ENCODE measurements at regions of chrX and their contacts with region 1.

Region 1: DNA sequence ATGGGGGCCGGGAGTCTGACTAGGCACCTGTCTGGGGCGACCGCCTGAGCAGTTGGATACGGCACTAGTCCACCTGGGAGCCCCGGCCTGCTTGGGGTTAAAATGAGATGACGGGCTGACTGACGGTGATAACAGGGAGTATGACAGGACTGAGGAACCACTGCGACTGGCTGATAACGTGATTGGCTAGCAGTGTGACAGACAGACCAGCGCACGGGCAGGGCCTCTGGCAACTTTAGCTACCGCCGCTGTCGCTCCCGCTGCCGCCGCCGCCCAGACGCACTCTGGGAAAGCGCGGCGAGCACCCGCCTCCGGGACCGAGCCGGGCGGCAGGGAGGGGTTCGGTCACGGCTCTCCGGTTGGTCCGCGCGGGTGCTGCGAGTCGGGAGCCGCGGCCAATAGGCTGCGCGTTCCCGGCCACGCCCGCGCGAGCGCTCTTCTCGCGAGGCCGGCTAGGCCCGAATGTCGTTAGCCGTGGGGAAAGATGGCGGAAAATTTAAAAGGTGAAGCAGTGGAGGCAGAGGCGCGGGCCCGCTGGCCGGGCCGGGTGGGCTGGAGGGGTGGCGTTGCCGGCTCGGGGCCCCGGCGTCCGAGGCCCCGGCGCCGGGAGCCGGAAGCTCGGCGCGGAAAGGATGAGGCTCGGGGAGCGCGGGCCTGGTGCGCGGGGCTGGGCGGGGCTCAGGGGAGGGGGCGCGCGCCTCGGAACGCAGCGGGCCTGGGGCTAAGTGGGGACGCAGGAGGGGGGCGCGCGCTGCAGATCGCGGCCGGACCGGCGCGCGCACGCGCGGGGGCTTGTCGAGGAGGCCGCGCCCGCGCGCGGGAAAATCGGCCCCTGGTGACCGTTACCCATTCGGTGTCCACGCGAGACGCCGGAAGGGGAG is at the start of gene SUV39H1:
- DNase-seq: peak; percentile 89
- ATAC-seq: peak; percentile 95
- H3K4me3 ChIP-seq: peak within 1 kb of the TSS; percentile 13 to 63 (median 60)
- H3K4me3 Mint-ChIP-seq: peak within 1 kb of the TSS; percentile 92
- H3K27ac ChIP-seq: peak within 1 kb of the TSS; percentile 63 to 85
- H3K27ac Mint-ChIP-seq: peak within 1 kb of the TSS; percentile 93
- H3K4me1 ChIP-seq: peaks cover 7 to 16% of the 10 kb centered on the region in 2 donors
- H3K4me1 Mint-ChIP-seq: peaks cover 16% of the 10 kb centered on the region
- H3K27me3 ChIP-seq: no peaks in the 10 kb centered on the region
- H3K27me3 Mint-ChIP-seq: no peaks in the 10 kb centered on the region
- CTCF ChIP-seq: no peak
- total RNA-seq, gene SUV39H1: 8.9 and 9.5 TPM in 2 replicates

Region 2: DNA sequence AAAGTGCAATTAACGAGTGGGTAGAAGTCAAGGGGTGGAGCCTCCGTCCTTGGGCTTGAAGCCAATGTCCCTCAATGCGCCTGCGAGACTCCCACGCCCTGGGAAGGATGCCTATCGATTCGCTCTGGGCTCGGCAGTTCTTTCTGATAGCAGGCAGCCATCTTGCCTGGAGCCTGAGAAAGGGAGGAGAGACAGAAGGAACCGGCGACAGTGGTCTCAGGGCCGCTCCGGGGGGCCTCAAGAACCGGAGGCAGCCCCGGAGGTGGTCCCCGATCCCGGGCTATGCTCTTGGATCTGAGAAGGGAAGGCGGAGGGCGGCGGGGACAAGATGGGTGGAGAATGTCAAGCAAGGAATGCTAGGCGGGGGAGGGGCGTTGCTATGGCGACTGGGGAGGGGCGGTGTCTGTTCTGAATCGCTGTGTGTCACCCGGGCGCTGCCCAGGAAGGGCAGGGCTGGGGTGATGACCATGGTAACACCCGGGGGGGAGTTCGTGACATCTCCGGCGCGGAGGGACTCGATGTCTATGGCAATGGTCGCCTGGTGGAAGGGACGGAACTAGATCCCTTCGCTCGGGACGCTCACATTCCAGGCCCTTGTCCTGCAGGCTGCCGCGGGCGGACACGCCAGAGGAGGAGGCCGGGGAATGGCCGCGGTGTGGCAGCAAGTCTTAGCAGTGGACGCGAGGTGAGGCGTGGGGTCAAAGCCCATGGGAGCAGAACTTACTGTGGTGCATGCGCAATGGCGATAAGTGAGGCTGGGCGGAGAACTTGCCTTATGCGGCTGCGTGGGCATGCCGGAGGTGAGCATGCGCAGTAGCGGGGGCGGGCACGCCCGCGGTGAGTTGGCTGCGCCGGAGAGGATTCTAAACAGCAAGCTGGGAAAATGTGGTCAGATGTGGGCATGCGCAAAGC is 98.9 kb before region 1 on chrX and contains the start of gene WDR13:
- CTCF ChIA-PET with region 1: no interaction called
- POLR2A ChIA-PET with region 1: no interaction called
- intact Hi-C with region 1: loop called (anchors 5 kb)
- DNase-seq: peak; percentile 91
- ATAC-seq: peak; percentile 76
- H3K4me3 ChIP-seq: peak within 1 kb of the TSS; percentile 55 to 93 (median 75)
- H3K4me3 Mint-ChIP-seq: peak within 1 kb of the TSS; percentile 98
- H3K27ac ChIP-seq: peak within 1 kb of the TSS; percentile 95 to 98
- H3K27ac Mint-ChIP-seq: peak within 1 kb of the TSS; percentile 100
- H3K4me1 ChIP-seq: peaks cover 0 to 12% of the 10 kb centered on the region in 2 donors
- H3K4me1 Mint-ChIP-seq: peaks cover 8% of the 10 kb centered on the region
- H3K27me3 ChIP-seq: no peaks in the 10 kb centered on the region
- H3K27me3 Mint-ChIP-seq: no peaks in the 10 kb centered on the region
- CTCF ChIP-seq: no peak
- total RNA-seq, gene WDR13: 85.1 and 94.6 TPM in 2 replicates

Region 3: GRCh38 chrX:48676106-48676892 is 20.2 kb before region 1 on chrX:
- CTCF ChIA-PET with region 1: no interaction called
- POLR2A ChIA-PET with region 1: no interaction called
- intact Hi-C with region 1: loop called (anchors 1 kb)
- DNase-seq: peak; percentile 91
- ATAC-seq: peak; percentile 95
- H3K4me3 ChIP-seq: peak overlapping the region; percentile 47 to 75 (median 68)
- H3K4me3 Mint-ChIP-seq: peak overlapping the region; percentile 91
- H3K27ac ChIP-seq: peak overlapping the region; percentile 77 to 85
- H3K27ac Mint-ChIP-seq: peak overlapping the region; percentile 93
- H3K4me1 ChIP-seq: peaks cover 0 to 26% of the 10 kb centered on the region in 2 donors
- H3K4me1 Mint-ChIP-seq: peaks cover 18% of the 10 kb centered on the region
- H3K27me3 ChIP-seq: no peaks in the 10 kb centered on the region
- H3K27me3 Mint-ChIP-seq: no peaks in the 10 kb centered on the region
- CTCF ChIP-seq: no peak

Region 4: DNA sequence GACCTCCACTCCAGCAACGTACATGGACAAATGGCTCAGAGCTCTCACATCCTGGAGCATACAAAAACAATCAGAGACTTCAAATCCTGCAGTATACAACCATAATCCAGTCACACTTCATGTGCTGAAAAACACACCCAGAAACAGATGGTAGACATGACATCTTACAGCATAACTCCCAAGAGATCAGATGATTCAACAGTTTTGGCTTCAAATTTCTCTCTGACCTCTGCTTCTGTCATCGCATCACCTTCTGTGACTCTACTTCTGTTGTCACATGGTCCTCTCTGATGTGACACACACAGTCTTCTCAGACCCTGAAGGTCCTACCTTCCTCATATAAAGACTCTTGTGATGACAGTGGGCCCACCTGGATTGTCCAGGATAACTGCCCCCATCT is 18.5 kb after region 1 on chrX:
- CTCF ChIA-PET with region 1: no interaction called
- POLR2A ChIA-PET with region 1: no interaction called
- intact Hi-C with region 1: no loop called
- DNase-seq: no peak
- ATAC-seq: no peak
- H3K4me3 ChIP-seq: no peak overlapping the region
- H3K4me3 Mint-ChIP-seq: no peak overlapping the region
- H3K27ac ChIP-seq: no peak overlapping the region
- H3K27ac Mint-ChIP-seq: no peak overlapping the region
- H3K4me1 ChIP-seq: no peaks in the 10 kb centered on the region
- H3K4me1 Mint-ChIP-seq: peaks cover 7% of the 10 kb centered on the region
- H3K27me3 ChIP-seq: no peaks in the 10 kb centered on the region
- H3K27me3 Mint-ChIP-seq: no peaks in the 10 kb centered on the region
- CTCF ChIP-seq: no peak

Region 5: DNA sequence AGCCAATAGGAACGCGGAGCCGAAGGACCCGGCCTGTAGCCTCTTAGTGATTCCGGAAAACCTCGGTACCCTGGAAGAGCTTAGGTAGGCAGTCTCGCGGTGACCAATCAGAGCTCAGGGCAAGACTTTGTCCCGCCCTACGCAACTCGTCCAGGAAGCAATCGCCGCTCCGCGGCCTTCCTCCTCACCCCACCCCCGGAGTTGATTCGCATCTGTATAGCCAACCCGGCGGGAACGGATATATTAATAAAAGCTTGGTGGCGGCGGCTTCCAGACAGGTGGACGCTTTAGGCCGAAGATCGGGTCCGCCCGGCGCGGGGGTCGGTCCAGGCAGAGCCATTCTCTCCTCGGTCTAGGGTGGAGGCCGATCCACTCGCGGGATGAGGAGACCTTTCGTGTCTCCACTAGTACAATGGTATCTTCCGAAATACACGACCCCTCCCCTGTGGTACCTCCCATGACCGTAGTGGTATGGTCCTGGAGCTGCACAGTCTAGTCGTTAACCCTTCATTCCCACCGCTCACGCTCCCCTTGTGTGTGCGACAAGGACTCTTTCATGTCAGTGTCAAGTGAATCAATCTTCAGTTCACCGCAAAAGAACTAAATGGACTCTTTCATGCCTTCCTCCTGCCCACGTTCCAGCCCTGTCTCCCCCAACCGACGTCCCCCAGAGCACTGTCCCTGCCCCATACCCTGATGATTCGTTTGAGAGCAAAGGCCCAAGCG is 40.8 kb after region 1 on chrX:
- CTCF ChIA-PET with region 1: no interaction called
- POLR2A ChIA-PET with region 1: interaction called, 4 read pairs
- intact Hi-C with region 1: loop called (anchors 1 kb)
- DNase-seq: peak; percentile 94
- ATAC-seq: peak; percentile 98
- H3K4me3 ChIP-seq: peak overlapping the region; percentile 15 to 75 (median 67)
- H3K4me3 Mint-ChIP-seq: peak overlapping the region; percentile 98
- H3K27ac ChIP-seq: peak overlapping the region; percentile 85 to 91
- H3K27ac Mint-ChIP-seq: peak overlapping the region; percentile 96
- H3K4me1 ChIP-seq: peaks cover 0 to 15% of the 10 kb centered on the region in 2 donors
- H3K4me1 Mint-ChIP-seq: peaks cover 13% of the 10 kb centered on the region
- H3K27me3 ChIP-seq: no peaks in the 10 kb centered on the region
- H3K27me3 Mint-ChIP-seq: no peaks in the 10 kb centered on the region
- CTCF ChIP-seq: no peak

Region 6: DNA sequence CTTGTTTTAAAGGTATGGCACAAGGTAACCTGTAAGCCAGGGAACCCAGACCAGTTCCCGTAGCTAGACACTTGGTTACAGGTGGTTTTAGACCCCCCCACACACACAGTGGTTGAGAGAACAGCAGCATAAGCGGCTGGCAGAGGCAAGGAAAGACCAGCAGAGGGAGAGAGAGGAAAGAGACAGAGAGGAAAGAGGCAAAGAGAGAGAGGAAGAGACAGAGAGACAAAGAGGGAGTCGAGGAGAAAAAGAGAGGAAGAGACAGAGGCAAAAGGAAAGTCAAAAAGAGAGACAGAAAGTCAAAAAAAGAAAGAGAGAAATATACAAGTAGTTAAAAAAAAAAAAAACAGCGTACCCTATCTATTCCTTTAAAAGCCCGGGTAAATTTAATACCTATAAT is 158.4 kb after region 1 on chrX:
- CTCF ChIA-PET with region 1: no interaction called
- POLR2A ChIA-PET with region 1: no interaction called
- intact Hi-C with region 1: no loop called
- DNase-seq: no peak
- ATAC-seq: no peak
- H3K4me3 ChIP-seq: no peak overlapping the region
- H3K4me3 Mint-ChIP-seq: no peak overlapping the region
- H3K27ac ChIP-seq: no peak overlapping the region
- H3K27ac Mint-ChIP-seq: no peak overlapping the region
- H3K4me1 ChIP-seq: no peaks in the 10 kb centered on the region
- H3K4me1 Mint-ChIP-seq: no peaks in the 10 kb centered on the region
- H3K27me3 ChIP-seq: no peaks in the 10 kb centered on the region
- H3K27me3 Mint-ChIP-seq: peaks cover 10% of the 10 kb centered on the region
- CTCF ChIP-seq: no peak

Region 7: GRCh38 chrX:48891402-48892288 is 195.1 kb after region 1 on chrX:
- CTCF ChIA-PET with region 1: no interaction called
- POLR2A ChIA-PET with region 1: no interaction called
- intact Hi-C with region 1: loop called (anchors 5 kb)
- DNase-seq: peak; percentile 87
- ATAC-seq: peak; percentile 84
- H3K4me3 ChIP-seq: peak overlapping the region in 4 of 5 experiments; percentile 46 to 65 (median 60)
- H3K4me3 Mint-ChIP-seq: peak overlapping the region; percentile 84
- H3K27ac ChIP-seq: peak overlapping the region in 1 of 2 donors; percentile 48
- H3K27ac Mint-ChIP-seq: peak overlapping the region; percentile 73
- H3K4me1 ChIP-seq: peaks cover 6 to 9% of the 10 kb centered on the region in 2 donors
- H3K4me1 Mint-ChIP-seq: peaks cover 19% of the 10 kb centered on the region
- H3K27me3 ChIP-seq: no peaks in the 10 kb centered on the region
- H3K27me3 Mint-ChIP-seq: no peaks in the 10 kb centered on the region
- CTCF ChIP-seq: peak; percentile 60

Measured in B cell (primary cell).